ENCODE measurements at regions of chr11 and their contacts with region 1.

Region 1: GRCh38 chr11:61639816-61640443 is 40.3 kb upstream of the DAGLA start:
- DNase-seq: no peak
- H3K4me3 ChIP-seq: no peak overlapping the region
- H3K27ac ChIP-seq: no peak overlapping the region
- H3K4me1 ChIP-seq: no peaks in the 10 kb centered on the region
- H3K27me3 ChIP-seq: peaks cover 0 to 4% (median 3%) of the 10 kb centered on the region in 5 experiments

Region 2: GRCh38 chr11:61336171-61336922 is 303.6 kb before region 1 on chr11:
- CTCF ChIA-PET with region 1: no interaction called
- POLR2A ChIA-PET with region 1: no interaction called
- DNase-seq: peak; percentile 80 to 89 (median 85)
- H3K4me3 ChIP-seq: no peak overlapping the region
- H3K27ac ChIP-seq: no peak overlapping the region
- H3K4me1 ChIP-seq: peaks cover 4 to 45% (median 27%) of the 10 kb centered on the region in 4 experiments
- H3K27me3 ChIP-seq: no peaks in the 10 kb centered on the region

Region 3: GRCh38 chr11:61627567-61628445 is 12.1 kb before region 1 on chr11:
- CTCF ChIA-PET with region 1: interaction called, 26 read pairs
- POLR2A ChIA-PET with region 1: no interaction called
- DNase-seq: peak; percentile 25 to 52 (median 33)
- H3K4me3 ChIP-seq: no peak overlapping the region
- H3K27ac ChIP-seq: no peak overlapping the region
- H3K4me1 ChIP-seq: peaks cover 0 to 4% (median 0%) of the 10 kb centered on the region in 4 experiments
- H3K27me3 ChIP-seq: peaks cover 0 to 11% (median 3%) of the 10 kb centered on the region in 5 experiments

Region 4: GRCh38 chr11:61671527-61671926 is 31.6 kb after region 1 on chr11:
- CTCF ChIA-PET with region 1: interaction called, 10 read pairs
- POLR2A ChIA-PET with region 1: no interaction called
- DNase-seq: peak; percentile 22 to 53 (median 43)
- H3K4me3 ChIP-seq: no peak overlapping the region
- H3K27ac ChIP-seq: no peak overlapping the region
- H3K4me1 ChIP-seq: peaks cover 0 to 4% (median 0%) of the 10 kb centered on the region in 4 experiments
- H3K27me3 ChIP-seq: peaks cover 2 to 25% (median 4%) of the 10 kb centered on the region in 5 experiments

Region 5: GRCh38 chr11:61711498-61711897 is 71.6 kb after region 1 on chr11:
- CTCF ChIA-PET with region 1: no interaction called
- POLR2A ChIA-PET with region 1: no interaction called
- DNase-seq: no peak
- H3K4me3 ChIP-seq: no peak overlapping the region
- H3K27ac ChIP-seq: no peak overlapping the region
- H3K4me1 ChIP-seq: peaks cover 0 to 8% (median 4%) of the 10 kb centered on the region in 4 experiments
- H3K27me3 ChIP-seq: no peaks in the 10 kb centered on the region

Measured in common myeloid progenitor, CD34-positive (primary cell).